B cell (primary cell): ENCODE measurements at regions of chr19 and their contacts with region 1.

Region 1: DNA sequence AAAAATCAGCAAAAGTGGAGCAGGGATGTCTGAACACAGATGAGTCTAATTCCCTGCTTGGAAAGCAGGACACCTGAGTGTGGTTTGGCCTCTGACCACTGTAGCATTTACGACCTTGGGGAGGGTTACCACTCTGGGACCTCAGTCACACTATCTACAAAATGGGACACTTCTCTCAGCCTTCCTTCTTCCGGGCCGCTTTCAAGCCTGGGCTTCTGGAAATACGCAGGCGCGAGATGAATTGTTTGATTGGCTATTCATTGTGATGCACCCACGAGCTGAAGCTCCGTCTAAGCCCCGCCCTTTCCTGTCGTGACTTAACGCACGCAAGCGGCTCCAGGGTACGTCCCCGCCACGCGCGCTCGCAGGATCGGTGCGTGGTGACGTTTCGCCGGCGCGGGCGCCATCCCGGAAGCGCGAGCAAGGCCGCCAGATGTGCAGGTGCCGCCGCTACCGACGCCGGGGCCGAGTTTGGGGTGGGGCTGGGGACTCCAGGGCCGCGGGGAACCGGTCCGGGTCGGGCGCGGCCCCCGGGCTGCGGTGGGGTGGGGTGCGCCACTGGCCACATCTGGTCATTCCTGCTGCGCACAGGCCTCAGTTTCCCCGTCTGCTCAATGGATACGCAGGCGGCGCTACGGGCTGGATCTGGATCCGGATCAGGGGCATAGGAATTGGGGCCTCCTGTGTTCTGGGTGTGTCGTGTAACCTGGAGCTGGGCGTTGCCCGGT is at the start of gene KXD1:
- DNase-seq: peak; percentile 99
- ATAC-seq: peak; percentile 99
- H3K4me3 ChIP-seq: peak within 1 kb of the TSS; percentile 73 to 98 (median 93)
- H3K4me3 Mint-ChIP-seq: peak within 1 kb of the TSS; percentile 90
- H3K27ac ChIP-seq: peak within 1 kb of the TSS; percentile 82 to 97
- H3K27ac Mint-ChIP-seq: peak within 1 kb of the TSS; percentile 90
- H3K4me1 ChIP-seq: peaks cover 15 to 25% of the 10 kb centered on the region in 2 donors
- H3K4me1 Mint-ChIP-seq: peaks cover 21% of the 10 kb centered on the region
- H3K27me3 ChIP-seq: no peaks in the 10 kb centered on the region
- H3K27me3 Mint-ChIP-seq: no peaks in the 10 kb centered on the region
- CTCF ChIP-seq: no peak
- total RNA-seq, gene KXD1: 88.5 and 90.0 TPM in 2 replicates

Region 2: DNA sequence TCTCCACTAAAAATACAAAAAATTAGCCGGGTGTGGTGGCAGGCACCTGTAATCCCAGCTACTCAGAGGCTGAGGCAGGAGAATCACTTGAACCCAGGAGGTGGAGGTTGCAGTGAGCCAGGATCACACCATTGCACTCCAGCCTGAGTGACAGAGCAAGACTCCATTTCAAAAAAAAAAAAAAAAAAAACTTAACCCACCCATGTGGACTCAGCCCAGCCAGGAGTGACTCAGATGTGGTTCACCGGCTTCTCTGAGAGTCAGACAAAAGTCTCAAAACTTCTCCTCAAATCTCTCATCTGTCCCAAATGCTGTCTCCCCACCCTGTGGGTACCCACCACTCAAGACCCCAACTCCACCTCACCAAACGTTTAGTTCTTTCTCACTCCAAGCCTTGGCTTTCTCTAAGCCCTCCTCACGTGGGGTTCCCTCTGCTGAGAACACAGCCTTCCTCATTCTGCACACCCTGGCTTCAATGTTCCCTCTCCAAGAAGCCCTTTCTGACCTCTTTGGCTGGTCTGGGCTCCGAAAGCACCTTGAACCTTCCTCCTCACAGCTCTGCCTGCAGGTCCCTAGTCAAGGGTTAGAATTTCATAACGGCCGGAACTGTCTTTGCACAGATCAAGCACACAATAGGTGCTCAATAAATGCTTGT is 342.7 kb before region 1 on chr19:
- CTCF ChIA-PET with region 1: no interaction called
- POLR2A ChIA-PET with region 1: no interaction called
- intact Hi-C with region 1: no loop called
- DNase-seq: no peak
- ATAC-seq: no peak
- H3K4me3 ChIP-seq: no peak overlapping the region
- H3K4me3 Mint-ChIP-seq: no peak overlapping the region
- H3K27ac ChIP-seq: no peak overlapping the region
- H3K27ac Mint-ChIP-seq: no peak overlapping the region
- H3K4me1 ChIP-seq: no peaks in the 10 kb centered on the region
- H3K4me1 Mint-ChIP-seq: no peaks in the 10 kb centered on the region
- H3K27me3 ChIP-seq: peaks cover 0 to 34% (median 8%) of the 10 kb centered on the region in 4 experiments
- H3K27me3 Mint-ChIP-seq: peaks cover 14% of the 10 kb centered on the region
- CTCF ChIP-seq: no peak

Region 3: GRCh38 chr19:18450931-18451845 is 106.5 kb before region 1 on chr19:
- CTCF ChIA-PET with region 1: no interaction called
- POLR2A ChIA-PET with region 1: no interaction called
- intact Hi-C with region 1: no loop called
- DNase-seq: peak; percentile 87
- ATAC-seq: peak; percentile 96
- H3K4me3 ChIP-seq: no peak overlapping the region
- H3K4me3 Mint-ChIP-seq: no peak overlapping the region
- H3K27ac ChIP-seq: no peak overlapping the region
- H3K27ac Mint-ChIP-seq: peak overlapping the region; percentile 71
- H3K4me1 ChIP-seq: peaks cover 0 to 5% of the 10 kb centered on the region in 2 donors
- H3K4me1 Mint-ChIP-seq: peaks cover 6% of the 10 kb centered on the region
- H3K27me3 ChIP-seq: no peaks in the 10 kb centered on the region
- H3K27me3 Mint-ChIP-seq: no peaks in the 10 kb centered on the region
- CTCF ChIP-seq: peak; percentile 96

Region 4: GRCh38 chr19:18571564-18572300 is 14.1 kb after region 1 on chr19 and contains the start of gene UBA52:
- CTCF ChIA-PET with region 1: interaction called, 5 read pairs
- POLR2A ChIA-PET with region 1: interaction called, 26 read pairs
- intact Hi-C with region 1: loop called (anchors 1 kb)
- DNase-seq: peak; percentile 99
- ATAC-seq: peak; percentile 93
- H3K4me3 ChIP-seq: peak within 1 kb of the TSS; percentile 69 to 94 (median 86)
- H3K4me3 Mint-ChIP-seq: peak within 1 kb of the TSS; percentile 94
- H3K27ac ChIP-seq: peak within 1 kb of the TSS; percentile 85 to 95
- H3K27ac Mint-ChIP-seq: peak within 1 kb of the TSS; percentile 90
- H3K4me1 ChIP-seq: peaks cover 12 to 25% of the 10 kb centered on the region in 2 donors
- H3K4me1 Mint-ChIP-seq: peaks cover 16% of the 10 kb centered on the region
- H3K27me3 ChIP-seq: no peaks in the 10 kb centered on the region
- H3K27me3 Mint-ChIP-seq: no peaks in the 10 kb centered on the region
- CTCF ChIP-seq: no peak
- total RNA-seq, gene UBA52: 1,690 and 1,837 TPM in 2 replicates